ENCODE measurements at regions of chr1 and their contacts with region 1.

Region 1: GRCh38 chr1:222697826-222698225 is 14.5 kb downstream of the AIDA start:
- DNase-seq: no peak
- ATAC-seq: no peak
- H3K4me3 ChIP-seq: no peak overlapping the region
- H3K27ac ChIP-seq: no peak overlapping the region
- H3K4me1 ChIP-seq: no peaks in the 10 kb centered on the region
- H3K27me3 ChIP-seq: no peaks in the 10 kb centered on the region
- CTCF ChIP-seq: no peak
- POLR2A ChIP-seq: no peak
- RAD21 ChIP-seq: no peak

Region 2: GRCh38 chr1:222654849-222655248 is 43.0 kb before region 1 on chr1:
- CTCF ChIA-PET with region 1: no interaction called
- POLR2A ChIA-PET with region 1: no interaction called
- RAD21 ChIA-PET with region 1: no interaction called
- intact Hi-C with region 1: loop called (anchors 5 kb)
- DNase-seq: no peak
- ATAC-seq: no peak
- H3K4me3 ChIP-seq: no peak overlapping the region
- H3K27ac ChIP-seq: no peak overlapping the region
- H3K4me1 ChIP-seq: no peaks in the 10 kb centered on the region
- H3K27me3 ChIP-seq: no peaks in the 10 kb centered on the region
- CTCF ChIP-seq: no peak
- POLR2A ChIP-seq: no peak
- RAD21 ChIP-seq: no peak